ENCODE measurements at regions of chr10 and their contacts with region 1.

Region 1: DNA sequence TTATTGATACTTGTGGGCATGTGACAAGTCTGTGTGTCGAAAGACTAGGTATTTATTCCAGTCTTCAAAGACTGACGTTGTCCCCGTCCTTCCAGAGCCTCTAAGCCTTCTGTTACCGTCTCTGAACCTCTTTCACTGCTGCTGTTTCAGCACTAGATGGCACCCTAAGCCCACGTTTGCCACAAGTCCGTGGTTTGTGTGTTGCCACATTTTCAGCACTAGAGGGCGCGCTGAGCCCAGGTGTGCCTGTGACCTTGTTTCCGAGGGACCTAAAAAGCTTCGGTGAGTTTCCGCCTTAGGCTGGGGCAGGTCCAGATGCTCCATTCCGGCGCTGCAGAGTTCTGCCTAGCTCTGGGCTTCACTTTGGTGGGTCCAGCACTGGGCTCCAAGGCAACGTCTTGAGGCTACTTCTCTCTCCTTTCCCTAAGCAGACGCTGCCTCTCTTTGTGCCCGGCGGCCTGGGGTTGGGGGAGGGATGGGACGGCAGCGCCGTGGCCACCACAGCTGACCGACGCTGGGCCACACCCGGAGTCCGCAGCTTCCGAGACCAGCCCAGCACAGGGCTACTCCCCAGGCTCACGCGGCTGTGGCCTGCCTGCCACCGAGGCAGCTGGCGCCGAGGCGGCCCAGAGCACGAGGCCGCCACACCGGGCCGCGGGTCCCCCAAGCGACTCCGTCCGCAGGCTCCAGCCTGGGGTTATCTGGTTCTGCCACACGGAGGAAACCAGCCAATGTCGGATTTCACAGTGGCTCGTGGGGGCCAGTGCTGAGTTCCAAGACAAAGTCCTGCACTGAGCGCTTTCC is 520.2 kb downstream of the REEP3 start:
- DNase-seq: peak; percentile 21 to 80
- ATAC-seq: peak; percentile 86 to 97
- H3K4me3 ChIP-seq: peak overlapping the region; percentile 17; the same call in 1 of the 3 replicates
- H3K27ac ChIP-seq: peak overlapping the region in 1 of 2 experiments; percentile 51; a peak in 1 of 6 replicates
- H3K4me1 ChIP-seq: no peaks in the 10 kb centered on the region
- CTCF ChIP-seq: peak; percentile 100
- EP300 ChIP-seq: no peak
- POLR2A ChIP-seq: no peak
- RAD21 ChIP-seq: peak; percentile 98 to 99

Region 2: DNA sequence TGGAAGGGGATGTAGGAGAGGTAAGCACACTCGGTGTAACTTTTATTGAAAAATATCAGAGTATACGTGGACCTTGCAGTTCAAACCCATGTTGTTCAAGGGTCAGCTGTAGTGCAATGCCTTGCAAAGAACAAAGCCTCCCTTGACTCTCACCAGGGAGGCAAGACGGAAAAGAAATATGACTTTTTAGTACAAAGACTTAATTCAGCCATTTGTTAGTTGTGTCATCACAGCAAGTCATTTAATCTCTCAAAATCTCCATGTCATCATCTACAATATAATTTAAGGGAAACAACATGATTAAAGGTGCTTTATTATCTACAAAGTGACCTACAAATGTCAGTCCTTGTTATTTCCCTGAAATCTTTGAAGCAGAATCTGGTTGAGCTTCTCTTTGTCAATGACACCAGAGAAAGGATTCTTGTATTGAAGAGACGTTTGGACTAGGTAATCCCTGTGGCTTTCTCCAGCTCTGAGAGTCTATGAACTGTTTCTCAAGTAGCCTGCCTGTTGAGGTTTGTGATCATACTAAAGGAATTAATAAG is 17.4 kb before region 1 on chr10:
- CTCF ChIA-PET with region 1: interaction called, 37 read pairs
- POLR2A ChIA-PET with region 1: no interaction called
- DNase-seq: no peak
- ATAC-seq: no peak
- H3K4me3 ChIP-seq: no peak overlapping the region
- H3K27ac ChIP-seq: no peak overlapping the region
- H3K4me1 ChIP-seq: no peaks in the 10 kb centered on the region
- CTCF ChIP-seq: no peak
- EP300 ChIP-seq: no peak
- POLR2A ChIP-seq: no peak
- RAD21 ChIP-seq: no peak

Region 3: DNA sequence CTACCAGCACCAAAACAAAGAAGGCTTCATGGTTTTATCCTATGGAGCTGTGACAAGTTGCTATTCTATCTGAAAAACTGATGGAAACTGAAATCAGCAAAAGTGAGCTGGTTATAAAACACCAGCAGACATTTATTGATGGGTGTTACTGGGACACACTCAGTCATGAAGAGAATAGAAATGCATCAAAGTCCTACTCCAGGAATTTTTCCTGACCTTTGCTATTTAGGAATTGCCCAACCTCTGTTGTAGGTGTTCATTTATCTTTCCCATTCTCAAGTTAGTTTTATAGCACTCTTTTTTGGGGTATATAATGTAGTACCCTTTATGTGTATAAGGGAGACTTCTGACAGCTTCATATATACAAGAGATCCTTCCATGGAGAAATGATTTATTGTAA is 13.0 kb after region 1 on chr10:
- CTCF ChIA-PET with region 1: interaction called, 27 read pairs
- POLR2A ChIA-PET with region 1: no interaction called
- DNase-seq: no peak
- ATAC-seq: no peak
- H3K4me3 ChIP-seq: no peak overlapping the region
- H3K27ac ChIP-seq: no peak overlapping the region
- H3K4me1 ChIP-seq: no peaks in the 10 kb centered on the region
- CTCF ChIP-seq: no peak
- EP300 ChIP-seq: no peak
- POLR2A ChIP-seq: no peak
- RAD21 ChIP-seq: no peak

Region 4: GRCh38 chr10:64062793-64063192 is 21.4 kb after region 1 on chr10:
- CTCF ChIA-PET with region 1: interaction called, 27 read pairs
- POLR2A ChIA-PET with region 1: no interaction called
- DNase-seq: no peak
- ATAC-seq: no peak
- H3K4me3 ChIP-seq: no peak overlapping the region
- H3K27ac ChIP-seq: no peak overlapping the region
- H3K4me1 ChIP-seq: no peaks in the 10 kb centered on the region
- CTCF ChIP-seq: no peak
- EP300 ChIP-seq: no peak
- POLR2A ChIP-seq: no peak
- RAD21 ChIP-seq: no peak